ENCODE measurements at regions of chr13 and their contacts with region 1.

Region 1: GRCh38 chr13:79480954-79481684 is at the start of gene NDFIP2:
- DNase-seq: peak; percentile 80 to 94 (median 90)
- ATAC-seq: peak; percentile 81 to 95 (median 94)
- H3K4me3 ChIP-seq: peak within 1 kb of the TSS; percentile 56 to 96 (median 88)
- H3K27ac ChIP-seq: peak within 1 kb of the TSS; percentile 36 to 87 (median 78)
- H3K4me1 ChIP-seq: peaks cover 0 to 40% (median 26%) of the 10 kb centered on the region in 12 donors
- H3K27me3 ChIP-seq: peaks cover 0 to 4% (median 0%) of the 10 kb centered on the region in 9 donors
- CTCF ChIP-seq: peak in 2 of 12 donors; percentile 6 to 12
- POLR2A ChIP-seq: peak in 1 of 2 donors; percentile 73
- total RNA-seq, gene NDFIP2: 21.8 to 42.6 (median 32.4) TPM

Region 2: GRCh38 chr13:78981913-78982312 is 499.2 kb before region 1 on chr13:
- intact Hi-C with region 1: no loop called
- DNase-seq: no peak
- ATAC-seq: no peak
- H3K4me3 ChIP-seq: no peak overlapping the region
- H3K27ac ChIP-seq: no peak overlapping the region
- H3K4me1 ChIP-seq: no peaks in the 10 kb centered on the region
- H3K27me3 ChIP-seq: peaks cover 0 to 32% (median 0%) of the 10 kb centered on the region in 9 donors
- CTCF ChIP-seq: no peak
- POLR2A ChIP-seq: no peak

Region 3: DNA sequence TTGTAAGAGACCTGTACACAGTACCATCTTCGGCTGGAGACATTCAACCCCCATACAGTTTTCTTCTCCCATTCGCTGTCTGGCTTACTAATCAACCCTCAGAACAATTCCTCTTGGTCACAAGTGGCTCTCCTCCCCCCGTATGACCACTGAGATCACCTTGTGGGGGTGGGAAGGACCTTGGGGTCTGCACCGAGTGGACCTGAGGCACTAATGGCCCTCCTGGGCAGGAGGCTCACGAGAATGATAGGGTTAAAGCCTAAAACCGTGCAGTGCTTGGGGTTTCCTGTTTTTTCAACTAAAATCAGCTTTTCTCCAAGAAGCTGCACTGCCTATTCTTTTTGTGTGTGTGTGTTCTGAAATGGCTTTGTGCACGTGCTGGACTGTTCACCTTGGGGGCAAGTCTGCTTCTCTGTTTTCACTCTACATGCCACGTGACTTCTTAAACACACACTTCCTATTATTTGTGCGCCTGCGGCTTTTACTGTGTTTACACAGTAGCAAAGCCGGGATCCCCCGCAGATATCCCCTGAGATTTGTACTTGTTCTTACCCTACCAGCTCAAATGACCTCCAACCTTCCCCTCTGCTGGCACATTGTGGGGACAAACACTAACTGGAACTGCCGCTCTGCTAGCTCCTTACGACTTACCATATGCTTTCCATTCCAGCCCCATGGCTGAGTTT is 87.4 kb before region 1 on chr13:
- intact Hi-C with region 1: no loop called
- DNase-seq: no peak
- ATAC-seq: peak in 3 of 4 donors; percentile 24 to 63 (median 53)
- H3K4me3 ChIP-seq: peak overlapping the region in 1 of 12 donors; percentile 38
- H3K27ac ChIP-seq: peak overlapping the region in 1 of 12 donors; percentile 65
- H3K4me1 ChIP-seq: peaks cover 0 to 54% (median 17%) of the 10 kb centered on the region in 12 donors
- H3K27me3 ChIP-seq: no peaks in the 10 kb centered on the region
- CTCF ChIP-seq: no peak
- POLR2A ChIP-seq: no peak

Region 4: GRCh38 chr13:79417741-79418140 is 63.4 kb before region 1 on chr13:
- intact Hi-C with region 1: loop called in 3 of 10 experiments (anchors 5 to 10 kb)
- DNase-seq: no peak
- ATAC-seq: no peak
- H3K4me3 ChIP-seq: no peak overlapping the region
- H3K27ac ChIP-seq: no peak overlapping the region
- H3K4me1 ChIP-seq: no peaks in the 10 kb centered on the region
- H3K27me3 ChIP-seq: no peaks in the 10 kb centered on the region
- CTCF ChIP-seq: no peak
- POLR2A ChIP-seq: no peak

Region 5: GRCh38 chr13:79434556-79434955 is 46.6 kb before region 1 on chr13:
- intact Hi-C with region 1: loop called in 7 of 10 experiments (anchors 5 to 10 kb)
- DNase-seq: no peak
- ATAC-seq: no peak
- H3K4me3 ChIP-seq: no peak overlapping the region
- H3K27ac ChIP-seq: no peak overlapping the region
- H3K4me1 ChIP-seq: no peaks in the 10 kb centered on the region
- H3K27me3 ChIP-seq: no peaks in the 10 kb centered on the region
- CTCF ChIP-seq: no peak
- POLR2A ChIP-seq: no peak

Region 6: GRCh38 chr13:79533781-79534400 is 52.8 kb after region 1 on chr13:
- intact Hi-C with region 1: loop called in 7 of 10 experiments (anchors 5 to 10 kb)
- DNase-seq: no peak
- ATAC-seq: no peak
- H3K4me3 ChIP-seq: no peak overlapping the region
- H3K27ac ChIP-seq: no peak overlapping the region
- H3K4me1 ChIP-seq: peaks cover 0 to 13% (median 2%) of the 10 kb centered on the region in 12 donors
- H3K27me3 ChIP-seq: no peaks in the 10 kb centered on the region
- CTCF ChIP-seq: no peak
- POLR2A ChIP-seq: no peak